ENCODE measurements at regions of chr6 and their contacts with region 1.

Region 1: DNA sequence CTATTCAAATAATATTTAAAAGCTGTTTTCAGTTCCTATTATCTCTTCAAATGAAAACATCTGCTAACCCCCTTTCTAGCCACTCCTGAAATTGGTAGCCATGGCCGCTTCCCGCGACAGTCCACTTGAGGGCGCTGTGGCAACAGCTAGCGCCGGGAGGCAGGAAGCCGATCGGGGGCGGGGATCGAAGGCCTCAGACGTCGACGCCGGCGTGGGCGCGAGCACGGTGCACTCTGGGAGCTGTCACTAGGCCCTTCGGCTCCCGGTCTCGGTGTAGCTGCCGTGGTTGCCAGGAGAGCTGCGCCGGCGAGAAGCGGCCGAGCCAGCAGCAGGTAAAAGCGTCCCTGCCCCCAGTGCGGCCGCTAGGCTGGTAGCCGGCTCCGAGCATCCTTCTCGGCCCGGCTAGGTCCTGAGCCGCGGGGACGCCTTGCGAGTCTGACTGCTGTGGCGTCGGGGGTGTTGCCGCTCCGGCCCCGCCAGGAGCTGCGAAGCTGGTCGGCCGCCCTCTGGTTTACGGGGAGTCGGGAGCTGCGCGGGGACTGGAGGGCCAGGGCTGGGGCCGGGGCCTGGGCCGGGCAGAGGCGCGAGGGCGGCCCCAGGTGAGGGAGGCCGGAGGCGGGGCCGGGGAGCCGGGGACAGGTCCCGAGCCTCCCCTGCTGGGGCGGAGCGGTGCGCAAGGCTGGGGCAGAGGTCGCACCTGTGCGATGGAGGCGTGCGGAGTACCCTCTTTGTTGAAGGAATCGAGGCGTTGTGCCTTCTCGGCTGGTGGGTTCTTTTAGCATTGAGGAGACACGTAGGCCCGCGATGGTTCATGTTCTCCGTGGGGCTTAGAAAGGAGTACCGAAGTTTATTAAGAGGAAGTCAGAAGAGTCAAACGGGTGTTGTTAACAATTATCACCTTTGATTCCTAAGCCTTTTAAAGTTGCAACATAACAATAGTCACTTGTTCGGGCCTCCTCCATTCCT is at the start of gene DOP1A:
- DNase-seq: peak; percentile 98
- H3K4me3 ChIP-seq: peak within 1 kb of the TSS; percentile 92
- H3K27ac ChIP-seq: peak within 1 kb of the TSS; percentile 96
- H3K4me1 ChIP-seq: no peaks in the 10 kb centered on the region
- H3K27me3 ChIP-seq: no peaks in the 10 kb centered on the region
- CTCF ChIP-seq: peak; percentile 96
- total RNA-seq, gene DOP1A: 20.3 to 29.6 TPM

Region 2: DNA sequence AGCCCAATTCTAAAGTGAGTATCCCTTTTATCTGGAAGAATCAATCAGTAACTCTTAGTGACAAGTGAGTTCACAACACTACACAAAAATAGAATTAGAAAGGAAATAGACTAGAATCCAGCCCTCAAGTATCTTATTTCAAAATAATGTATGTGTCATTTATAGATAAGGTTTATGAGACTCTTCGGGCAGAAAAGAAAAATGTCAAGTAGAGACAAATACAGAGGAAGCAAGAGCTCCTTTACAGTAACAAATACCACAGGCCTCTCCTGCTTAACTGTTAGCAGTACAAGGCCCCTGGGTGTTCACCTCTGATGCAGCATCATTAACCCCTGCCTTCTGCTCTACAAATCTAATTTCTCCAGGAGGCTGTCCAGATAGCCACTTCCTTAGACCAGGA is 78.8 kb before region 1 on chr6:
- intact Hi-C with region 1: no loop called
- DNase-seq: no peak
- H3K4me3 ChIP-seq: no peak overlapping the region
- H3K27ac ChIP-seq: no peak overlapping the region
- H3K4me1 ChIP-seq: no peaks in the 10 kb centered on the region
- H3K27me3 ChIP-seq: no peaks in the 10 kb centered on the region
- CTCF ChIP-seq: no peak

Region 3: DNA sequence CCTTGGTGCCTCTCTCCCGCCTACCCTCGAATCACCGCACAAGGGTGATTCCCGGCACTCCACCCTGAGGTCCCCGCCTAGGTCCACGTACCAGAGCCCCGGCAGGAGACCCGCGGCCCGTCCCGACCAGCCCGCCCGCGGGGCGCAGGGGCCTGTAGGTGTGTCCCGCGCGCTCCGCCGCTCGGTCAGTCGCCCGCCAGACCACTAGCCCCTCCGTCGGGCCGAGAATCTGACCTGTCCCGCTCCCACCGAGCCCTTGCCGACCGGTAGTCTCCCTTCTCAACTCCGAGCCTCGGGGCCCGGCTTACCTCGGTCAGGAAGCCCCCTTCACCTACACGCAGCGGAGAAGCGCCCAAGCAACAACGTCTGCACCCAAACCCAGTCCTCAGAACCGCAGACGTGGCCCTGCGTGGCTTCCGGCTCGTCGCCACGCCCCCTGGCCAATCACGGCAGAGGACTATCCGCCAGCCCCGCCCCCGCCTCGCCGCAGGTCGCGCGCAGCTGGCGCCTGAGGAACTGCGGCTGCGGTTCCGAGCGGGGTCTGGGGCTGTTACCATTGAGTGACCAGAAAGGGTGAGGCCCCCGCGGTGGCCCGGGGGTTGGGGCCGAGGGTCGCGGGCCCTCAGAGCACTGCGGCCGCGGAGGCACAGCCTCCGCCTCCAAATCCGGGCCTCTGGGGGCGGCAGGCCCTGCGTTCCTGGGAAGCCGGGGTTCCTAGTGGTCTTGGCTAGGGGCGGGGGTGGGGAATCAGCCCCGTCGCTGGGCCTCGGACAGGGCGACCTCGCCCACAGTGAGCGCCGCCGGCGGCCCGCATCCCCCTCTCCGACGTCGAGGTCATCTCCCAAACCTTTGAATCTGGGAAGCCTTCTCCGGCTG is 125.4 kb after region 1 on chr6 and contains the starts of genes PGM3 and RWDD2A:
- intact Hi-C with region 1: loop called (anchors 5 kb)
- DNase-seq: peak; percentile 94
- H3K4me3 ChIP-seq: peak within 1 kb of the TSS; percentile 88
- H3K27ac ChIP-seq: peak within 1 kb of the TSS; percentile 70
- H3K4me1 ChIP-seq: peaks cover 7% of the 10 kb centered on the region
- H3K27me3 ChIP-seq: no peaks in the 10 kb centered on the region
- CTCF ChIP-seq: no peak
- total RNA-seq, gene PGM3: 52.8 to 57.0 TPM
- total RNA-seq, gene RWDD2A: 2.1 to 4.6 TPM

Region 4: GRCh38 chr6:83215131-83216047 is 147.7 kb after region 1 on chr6:
- intact Hi-C with region 1: loop called (anchors 5 kb)
- DNase-seq: peak; percentile 61
- H3K4me3 ChIP-seq: no peak overlapping the region
- H3K27ac ChIP-seq: no peak overlapping the region
- H3K4me1 ChIP-seq: no peaks in the 10 kb centered on the region
- H3K27me3 ChIP-seq: no peaks in the 10 kb centered on the region
- CTCF ChIP-seq: peak; percentile 70

Region 5: GRCh38 chr6:83514866-83515466 is 447.2 kb after region 1 on chr6:
- intact Hi-C with region 1: loop called (anchors 10 kb)
- DNase-seq: peak; percentile 42
- H3K4me3 ChIP-seq: no peak overlapping the region
- H3K27ac ChIP-seq: no peak overlapping the region
- H3K4me1 ChIP-seq: no peaks in the 10 kb centered on the region
- H3K27me3 ChIP-seq: no peaks in the 10 kb centered on the region
- CTCF ChIP-seq: peak; percentile 74

Region 6: DNA sequence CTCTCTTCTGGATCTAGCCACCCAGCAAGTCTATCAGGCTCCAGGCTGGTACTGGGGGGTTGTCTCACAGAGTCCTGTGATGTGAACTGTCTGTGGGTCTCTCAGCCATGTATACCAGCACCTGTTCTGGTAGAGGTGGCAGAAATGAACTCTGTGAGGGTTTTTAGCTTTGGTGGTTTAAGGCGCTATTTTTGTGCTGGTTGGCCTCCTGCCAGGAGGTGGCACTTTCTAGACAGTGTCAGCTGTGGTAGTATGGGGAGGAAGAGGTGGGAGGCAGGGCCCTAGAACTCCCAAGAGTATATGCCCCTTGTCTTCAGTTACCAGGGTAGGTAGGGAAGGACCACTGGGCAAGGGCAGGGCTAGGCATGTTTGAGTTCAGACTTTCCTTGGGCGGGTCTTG is 565.4 kb after region 1 on chr6:
- intact Hi-C with region 1: no loop called
- DNase-seq: no peak
- H3K4me3 ChIP-seq: no peak overlapping the region
- H3K27ac ChIP-seq: no peak overlapping the region
- H3K4me1 ChIP-seq: no peaks in the 10 kb centered on the region
- H3K27me3 ChIP-seq: no peaks in the 10 kb centered on the region
- CTCF ChIP-seq: no peak